GM12878 (cell line): ENCODE measurements at regions of chr1 and their contacts with region 1.

Region 1: DNA sequence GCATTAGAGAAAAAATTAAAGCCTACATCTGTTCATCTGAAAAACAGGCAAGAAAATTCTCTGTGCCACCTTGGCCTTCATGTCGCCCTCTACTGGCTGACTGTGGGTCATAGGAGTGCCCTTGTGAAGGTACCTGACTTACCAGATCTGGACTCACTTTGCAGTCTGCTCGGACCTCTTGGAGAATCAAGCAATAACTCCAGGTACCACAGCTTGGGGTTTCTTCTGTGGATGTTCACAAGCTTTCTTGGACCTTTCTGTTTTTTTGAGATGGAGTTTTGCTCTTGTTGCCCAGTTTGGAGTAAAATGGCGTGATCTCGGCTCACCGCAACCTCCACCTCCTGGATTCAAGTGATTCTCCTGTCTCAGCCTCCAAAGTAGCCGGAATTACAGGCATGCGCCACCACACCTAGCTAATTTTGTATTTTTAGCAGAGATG is 2.4 kb upstream of the PRAMEF18 start:
- DNase-seq: no peak
- ATAC-seq: peak; percentile 82
- H3K4me3 ChIP-seq: no peak overlapping the region
- H3K27ac ChIP-seq: no peak overlapping the region
- H3K4me1 ChIP-seq: no peaks in the 10 kb centered on the region
- H3K27me3 ChIP-seq: no peaks in the 10 kb centered on the region; a peak in 1 of 4 replicates
- CTCF ChIP-seq: peak; percentile 54 to 83 (median 77)
- EP300 ChIP-seq: no peak
- POLR2A ChIP-seq: no peak
- RAD21 ChIP-seq: 0 out of 2 replicates have a peak, but pooled peaks have one; percentile 14

Region 2: GRCh38 chr1:12549460-12550349 is 678.7 kb before region 1 on chr1:
- CTCF ChIA-PET with region 1: no interaction called
- POLR2A ChIA-PET with region 1: no interaction called
- RAD21 ChIA-PET with region 1: no interaction called
- SMC1A ChIA-PET with region 1: no interaction called
- in situ Hi-C with region 1: loop called (anchors 25 kb)
- intact Hi-C with region 1: no loop called
- DNase-seq: no peak
- ATAC-seq: no peak
- H3K4me3 ChIP-seq: no peak overlapping the region
- H3K27ac ChIP-seq: no peak overlapping the region
- H3K4me1 ChIP-seq: no peaks in the 10 kb centered on the region
- H3K27me3 ChIP-seq: no peaks in the 10 kb centered on the region; a peak in 1 of 4 replicates
- CTCF ChIP-seq: no peak
- EP300 ChIP-seq: no peak
- POLR2A ChIP-seq: no peak
- RAD21 ChIP-seq: no peak

Region 3: DNA sequence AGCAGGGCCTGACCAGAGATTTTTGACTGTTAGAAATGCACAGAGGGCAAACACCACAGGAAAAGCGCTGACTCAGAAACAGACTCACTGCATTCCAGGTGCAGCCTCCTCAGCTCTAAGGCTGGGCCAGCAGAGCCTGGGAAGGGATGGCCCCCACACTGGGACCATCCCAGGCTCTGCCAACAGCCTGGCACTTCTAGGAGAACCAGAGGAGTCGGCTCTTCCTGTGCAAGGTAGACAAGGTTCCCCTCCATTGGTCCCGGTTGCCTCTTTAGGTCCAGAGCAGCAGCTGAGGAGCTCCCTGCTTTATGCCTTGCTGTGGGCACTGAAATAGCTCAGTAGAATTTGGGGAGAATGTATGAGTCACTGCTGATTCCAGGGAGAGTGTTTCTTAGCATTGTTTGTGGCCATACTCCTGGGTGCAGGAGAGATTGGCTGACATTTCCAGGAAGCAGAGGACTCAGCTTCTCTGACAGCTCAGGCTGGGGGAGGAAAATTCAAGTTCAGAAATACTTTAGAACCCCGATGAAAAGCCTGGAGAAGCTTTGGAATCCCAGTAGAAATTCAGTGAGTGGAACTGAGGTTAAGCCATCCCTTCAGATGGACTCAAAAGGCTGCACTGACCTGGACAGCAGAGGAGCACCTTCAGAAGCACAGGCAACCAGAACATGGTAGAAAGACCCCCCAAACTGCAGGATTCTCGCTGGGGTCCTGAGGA is 417.5 kb before region 1 on chr1:
- CTCF ChIA-PET with region 1: no interaction called
- POLR2A ChIA-PET with region 1: no interaction called
- RAD21 ChIA-PET with region 1: no interaction called
- SMC1A ChIA-PET with region 1: no interaction called
- in situ Hi-C with region 1: loop called (anchors 25 kb)
- intact Hi-C with region 1: no loop called
- DNase-seq: no peak
- ATAC-seq: no peak
- H3K4me3 ChIP-seq: no peak overlapping the region
- H3K27ac ChIP-seq: no peak overlapping the region
- H3K4me1 ChIP-seq: no peaks in the 10 kb centered on the region
- H3K27me3 ChIP-seq: no peaks in the 10 kb centered on the region; a peak in 1 of 4 replicates
- CTCF ChIP-seq: no peak
- EP300 ChIP-seq: no peak
- POLR2A ChIP-seq: no peak
- RAD21 ChIP-seq: no peak

Region 4: DNA sequence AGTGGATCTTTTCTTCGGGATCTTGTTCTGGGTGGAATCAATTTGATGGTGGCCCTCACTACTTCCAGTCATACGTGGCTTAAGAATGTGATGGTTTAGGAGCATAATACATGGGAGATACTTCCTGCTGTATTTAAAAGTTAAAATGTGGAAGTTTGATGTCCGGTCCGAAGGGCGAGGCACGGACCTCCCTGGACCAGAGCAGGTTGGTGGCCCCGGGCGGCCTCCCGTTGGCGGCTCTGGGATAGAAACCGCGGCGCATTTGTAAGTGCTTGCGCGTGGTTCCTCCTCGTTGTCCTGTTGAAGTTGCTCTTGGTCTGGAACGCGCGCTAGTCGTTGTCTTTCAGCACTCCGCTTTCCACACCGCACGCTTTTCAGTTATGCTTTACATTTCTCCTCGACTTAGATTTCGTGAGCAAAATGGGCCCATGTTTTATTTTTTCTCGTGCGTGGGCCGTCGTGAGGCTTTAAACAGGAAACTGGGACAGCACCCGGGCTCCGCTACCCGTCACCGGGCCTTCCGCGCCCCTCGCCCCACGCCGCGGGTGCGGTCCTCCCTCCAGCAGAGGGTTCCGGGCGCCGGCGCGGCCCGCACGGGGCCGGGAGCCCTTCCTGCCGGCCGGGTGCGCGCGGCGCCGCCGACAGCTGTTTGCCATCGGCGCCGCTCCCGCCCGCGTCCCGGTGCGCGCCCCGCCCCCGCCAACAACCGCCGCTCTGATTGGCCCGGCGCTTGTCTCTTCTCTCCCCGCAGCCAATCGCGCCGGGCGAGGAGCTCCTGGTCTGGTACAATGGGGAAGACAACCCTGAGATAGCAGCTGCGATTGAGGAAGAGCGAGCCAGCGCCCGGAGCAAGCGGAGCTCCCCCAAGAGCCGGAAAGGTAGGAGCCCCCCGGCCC is 520.5 kb after region 1 on chr1:
- CTCF ChIA-PET with region 1: no interaction called
- POLR2A ChIA-PET with region 1: no interaction called
- RAD21 ChIA-PET with region 1: no interaction called
- SMC1A ChIA-PET with region 1: no interaction called
- in situ Hi-C with region 1: no loop called
- intact Hi-C with region 1: no loop called
- DNase-seq: peak; percentile 61
- ATAC-seq: peak; percentile 87
- H3K4me3 ChIP-seq: peak overlapping the region; percentile 60
- H3K27ac ChIP-seq: peak overlapping the region; percentile 72
- H3K4me1 ChIP-seq: peaks cover 13% of the 10 kb centered on the region
- H3K27me3 ChIP-seq: no peaks in the 10 kb centered on the region
- CTCF ChIP-seq: peak in 2 of 3 experiments; percentile 0 to 18; a peak in 1 of 6 replicates
- EP300 ChIP-seq: no peak
- POLR2A ChIP-seq: peak; percentile 90
- RAD21 ChIP-seq: no peak